ENCODE measurements at regions of chr1 and their contacts with region 1.

Region 1: DNA sequence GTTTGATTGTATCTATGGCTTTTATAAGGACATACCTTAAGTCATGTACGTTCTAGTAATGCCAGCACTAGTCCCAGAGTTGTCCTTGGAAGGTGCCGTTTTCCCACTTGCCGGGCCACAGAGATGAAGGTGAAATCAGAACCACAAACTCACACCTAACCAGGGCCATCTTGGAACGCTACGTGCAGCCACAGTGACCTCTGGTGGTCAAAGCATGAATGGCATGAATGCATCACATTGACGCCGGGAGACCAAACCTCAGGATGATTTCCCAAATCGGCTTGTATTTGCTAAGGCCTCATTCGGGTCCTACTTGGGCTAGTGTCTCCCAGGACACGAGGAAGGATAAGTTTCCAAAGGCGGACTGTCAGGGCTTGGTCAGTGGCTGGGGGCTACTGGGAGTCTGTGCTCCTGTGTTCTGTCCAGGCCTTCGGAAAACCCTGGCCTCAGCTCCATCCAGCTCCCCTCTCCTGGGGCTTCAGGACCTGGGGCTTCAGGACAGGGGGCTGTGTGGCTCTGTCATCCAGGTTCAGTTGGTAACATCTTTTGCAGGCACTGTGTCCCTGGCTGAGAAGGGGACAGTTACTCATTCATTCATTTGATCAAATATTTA is 260.5 kb downstream of the PRDM2 start:
- DNase-seq: peak; percentile 51 to 60
- ATAC-seq: peak; percentile 20 to 77 (median 59)
- H3K4me3 ChIP-seq: no peak overlapping the region
- H3K27ac ChIP-seq: no peak overlapping the region
- H3K4me1 ChIP-seq: no peaks in the 10 kb centered on the region
- H3K27me3 ChIP-seq: peaks cover 0 to 39% (median 11%) of the 10 kb centered on the region in 7 donors
- CTCF ChIP-seq: peak; percentile 94 to 99 (median 97)

Region 2: GRCh38 chr1:13667691-13668090 is 292.8 kb before region 1 on chr1:
- intact Hi-C with region 1: loop called (anchors 1 to 5 kb)
- DNase-seq: no peak
- ATAC-seq: no peak
- H3K4me3 ChIP-seq: no peak overlapping the region
- H3K27ac ChIP-seq: no peak overlapping the region
- H3K4me1 ChIP-seq: peaks cover 0 to 13% (median 0%) of the 10 kb centered on the region in 9 donors
- H3K27me3 ChIP-seq: peaks cover 0 to 9% (median 0%) of the 10 kb centered on the region in 7 donors
- CTCF ChIP-seq: no peak

Region 3: DNA sequence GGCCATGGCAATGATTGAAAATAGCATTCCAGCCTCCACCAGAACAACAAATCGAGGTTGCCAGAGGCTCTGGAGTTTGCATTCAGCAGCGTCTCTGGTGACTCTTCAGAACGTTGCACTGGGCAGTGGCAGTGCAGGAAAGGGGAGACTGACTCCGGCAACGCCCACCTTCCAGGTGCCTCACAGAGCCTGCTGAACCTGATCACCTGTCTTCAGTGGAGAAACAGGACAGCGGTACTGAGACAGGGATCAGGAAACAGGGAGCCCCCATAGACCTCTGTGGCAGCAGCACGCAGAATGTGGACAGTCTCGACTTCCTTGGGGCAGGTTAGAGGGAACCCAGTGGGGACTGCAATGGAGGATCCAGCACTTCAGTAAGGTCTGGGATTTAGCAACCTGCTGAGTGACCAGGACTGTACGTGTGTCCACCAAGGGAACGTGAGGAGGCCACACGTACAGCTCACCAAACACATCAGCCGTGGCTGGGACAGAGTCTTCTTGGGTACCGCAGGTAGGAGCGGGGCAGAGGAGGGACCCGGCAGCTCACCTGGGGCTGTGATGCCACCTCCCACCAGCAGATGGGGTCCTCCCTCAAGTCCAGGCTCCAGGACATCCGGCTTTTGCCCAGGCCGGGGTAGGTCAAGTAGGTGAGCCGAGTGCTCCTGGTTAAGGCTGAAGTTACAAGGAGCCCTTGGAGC is 131.9 kb before region 1 on chr1:
- intact Hi-C with region 1: loop called in 7 of 10 experiments (anchors 5 to 10 kb)
- DNase-seq: no peak
- ATAC-seq: peak in 2 of 8 donors; percentile 9 to 54
- H3K4me3 ChIP-seq: no peak overlapping the region
- H3K27ac ChIP-seq: no peak overlapping the region
- H3K4me1 ChIP-seq: peaks cover 0 to 6% (median 0%) of the 10 kb centered on the region in 9 donors
- H3K27me3 ChIP-seq: peaks cover 0 to 29% (median 5%) of the 10 kb centered on the region in 7 donors
- CTCF ChIP-seq: peak in 7 of 9 donors; percentile 34 to 57 (median 41)

Region 4: GRCh38 chr1:13948888-13949391 is 11.5 kb before region 1 on chr1:
- intact Hi-C with region 1: no loop called
- DNase-seq: peak in 1 of 2 donors; percentile 16
- ATAC-seq: peak; percentile 56 to 90 (median 78)
- H3K4me3 ChIP-seq: no peak overlapping the region
- H3K27ac ChIP-seq: peak overlapping the region in 4 of 10 donors; percentile 30 to 76 (median 52)
- H3K4me1 ChIP-seq: no peaks in the 10 kb centered on the region
- H3K27me3 ChIP-seq: peaks cover 0 to 24% (median 0%) of the 10 kb centered on the region in 7 donors
- CTCF ChIP-seq: no peak

Region 5: DNA sequence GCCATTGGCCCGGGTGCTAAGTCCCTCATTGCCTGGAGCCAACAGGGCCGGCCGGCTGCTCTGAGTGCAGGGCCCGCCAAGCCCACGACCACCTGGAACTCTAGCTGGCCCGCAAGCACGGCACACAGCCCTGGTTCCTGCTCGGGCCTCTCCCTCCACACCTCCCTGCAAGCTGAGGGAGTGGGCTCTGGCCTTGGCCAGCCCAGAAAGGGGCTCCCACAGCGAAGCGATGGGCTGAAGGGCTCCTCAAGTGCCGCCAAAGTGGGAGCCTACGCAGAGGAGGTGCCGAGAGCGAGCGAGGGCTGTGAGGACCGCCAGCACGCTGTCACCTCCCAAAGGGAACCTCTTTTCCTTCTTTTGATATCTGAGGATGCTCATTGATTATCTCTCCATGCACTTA is 22.9 kb after region 1 on chr1:
- intact Hi-C with region 1: no loop called
- DNase-seq: no peak
- ATAC-seq: no peak
- H3K4me3 ChIP-seq: no peak overlapping the region
- H3K27ac ChIP-seq: no peak overlapping the region
- H3K4me1 ChIP-seq: no peaks in the 10 kb centered on the region
- H3K27me3 ChIP-seq: peaks cover 0 to 5% (median 0%) of the 10 kb centered on the region in 7 donors
- CTCF ChIP-seq: no peak

Region 6: GRCh38 chr1:14761291-14762153 is 801.0 kb after region 1 on chr1:
- intact Hi-C with region 1: loop called in 1 of 10 experiments (anchors 2 kb)
- DNase-seq: no peak
- ATAC-seq: no peak
- H3K4me3 ChIP-seq: no peak overlapping the region
- H3K27ac ChIP-seq: no peak overlapping the region
- H3K4me1 ChIP-seq: no peaks in the 10 kb centered on the region
- H3K27me3 ChIP-seq: peaks cover 0 to 85% (median 48%) of the 10 kb centered on the region in 7 donors
- CTCF ChIP-seq: no peak

Region 7: GRCh38 chr1:15056515-15057285 is 1096.2 kb after region 1 on chr1:
- intact Hi-C with region 1: loop called in 1 of 10 experiments (anchors 10 kb)
- DNase-seq: no peak
- ATAC-seq: peak in 2 of 8 donors; percentile 24 to 60
- H3K4me3 ChIP-seq: no peak overlapping the region
- H3K27ac ChIP-seq: no peak overlapping the region
- H3K4me1 ChIP-seq: no peaks in the 10 kb centered on the region
- H3K27me3 ChIP-seq: no peaks in the 10 kb centered on the region
- CTCF ChIP-seq: no peak

Measured in heart right ventricle (tissue), 16 donors.